ENCODE measurements at regions of chr20 and their contacts with region 1.

Region 1: GRCh38 chr20:20466341-20466879 is 98.5 kb downstream of the INSM1 start:
- DNase-seq: peak; percentile 41
- CTCF ChIP-seq: no peak

Region 2: GRCh38 chr20:20452254-20452676 is 14.1 kb before region 1 on chr20:
- CTCF ChIA-PET with region 1: interaction called, 12 read pairs
- POLR2A ChIA-PET with region 1: no interaction called
- DNase-seq: peak; percentile 64
- CTCF ChIP-seq: no peak

Region 3: GRCh38 chr20:20482453-20482852 is 16.0 kb after region 1 on chr20:
- CTCF ChIA-PET with region 1: interaction called, 10 read pairs
- POLR2A ChIA-PET with region 1: no interaction called
- DNase-seq: no peak
- CTCF ChIP-seq: no peak

Region 4: GRCh38 chr20:20624914-20625313 is 158.5 kb after region 1 on chr20:
- CTCF ChIA-PET with region 1: no interaction called
- POLR2A ChIA-PET with region 1: no interaction called
- DNase-seq: no peak
- CTCF ChIP-seq: no peak